Activated naive CD4-positive, alpha-beta T cell treated with anti-CD3 and anti-CD28 coated beads for 36 hours (primary cell): ENCODE measurements at regions of chr16 and their contacts with region 1.

Region 1: GRCh38 chr16:84084570-84085270 is 32.0 kb downstream of the MBTPS1 start:
- DNase-seq: peak; percentile 86
- H3K4me3 Mint-ChIP-seq: no peak overlapping the region
- H3K27ac Mint-ChIP-seq: no peak overlapping the region
- H3K4me1 Mint-ChIP-seq: peaks cover 32% of the 10 kb centered on the region
- H3K27me3 Mint-ChIP-seq: no peaks in the 10 kb centered on the region

Region 2: DNA sequence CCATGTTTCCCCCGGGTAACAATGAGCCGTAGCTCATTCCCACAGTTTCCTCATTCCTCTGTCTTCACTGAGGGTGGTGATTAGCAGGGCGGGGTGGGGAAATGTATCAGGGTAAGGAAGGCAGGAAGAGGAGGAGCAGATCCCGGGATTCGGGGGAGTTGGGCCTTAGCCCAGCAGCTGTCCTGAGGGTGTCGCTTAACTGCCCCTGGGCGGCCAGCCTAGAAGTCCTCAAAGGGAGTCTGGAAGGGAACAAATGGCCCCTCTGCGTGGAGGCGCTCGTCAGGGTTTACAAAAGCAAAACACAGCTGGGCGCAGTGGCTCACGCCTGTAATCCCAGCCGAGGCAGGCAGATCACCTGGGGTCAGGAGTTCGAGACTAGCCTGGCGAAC is 171.5 kb before region 1 on chr16:
- CTCF ChIA-PET with region 1: no interaction called
- intact Hi-C with region 1: no loop called
- DNase-seq: no peak
- H3K4me3 Mint-ChIP-seq: no peak overlapping the region
- H3K27ac Mint-ChIP-seq: no peak overlapping the region
- H3K4me1 Mint-ChIP-seq: no peaks in the 10 kb centered on the region
- H3K27me3 Mint-ChIP-seq: no peaks in the 10 kb centered on the region

Region 3: GRCh38 chr16:84044118-84044488 is 40.6 kb before region 1 on chr16:
- CTCF ChIA-PET with region 1: no interaction called
- intact Hi-C with region 1: no loop called
- DNase-seq: no peak
- H3K4me3 Mint-ChIP-seq: no peak overlapping the region
- H3K27ac Mint-ChIP-seq: no peak overlapping the region
- H3K4me1 Mint-ChIP-seq: peaks cover 5% of the 10 kb centered on the region
- H3K27me3 Mint-ChIP-seq: peaks cover 24% of the 10 kb centered on the region

Region 4: DNA sequence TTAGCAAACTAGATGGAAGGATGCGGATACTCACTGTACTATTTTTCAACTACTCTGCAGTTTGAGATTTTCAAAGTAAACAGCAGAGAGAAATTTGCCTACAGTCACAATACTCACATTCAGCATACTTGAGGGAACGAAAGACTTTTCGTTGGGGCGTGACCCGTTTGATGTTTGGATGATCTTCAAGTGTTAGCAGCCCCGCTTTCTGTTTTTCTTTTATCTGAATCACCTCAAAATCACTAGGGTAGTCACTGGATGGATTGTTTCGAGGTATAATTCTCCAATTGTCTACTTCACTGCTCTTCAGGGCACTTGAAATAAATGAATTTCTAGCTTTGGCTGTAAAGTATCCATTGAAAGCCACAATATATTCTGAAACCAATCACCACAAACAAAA is 14.2 kb after region 1 on chr16:
- CTCF ChIA-PET with region 1: interaction called, 12 read pairs
- intact Hi-C with region 1: loop called (anchors 1 kb)
- DNase-seq: no peak
- H3K4me3 Mint-ChIP-seq: no peak overlapping the region
- H3K27ac Mint-ChIP-seq: no peak overlapping the region
- H3K4me1 Mint-ChIP-seq: peaks cover 31% of the 10 kb centered on the region
- H3K27me3 Mint-ChIP-seq: no peaks in the 10 kb centered on the region

Region 5: GRCh38 chr16:84116720-84117493 is 32.2 kb after region 1 on chr16 and contains the start of gene MBTPS1:
- CTCF ChIA-PET with region 1: interaction called, 7 read pairs
- intact Hi-C with region 1: loop called (anchors 1 kb)
- DNase-seq: peak; percentile 98
- H3K4me3 Mint-ChIP-seq: peak within 1 kb of the TSS; percentile 91
- H3K27ac Mint-ChIP-seq: peak within 1 kb of the TSS; percentile 89
- H3K4me1 Mint-ChIP-seq: peaks cover 26% of the 10 kb centered on the region
- H3K27me3 Mint-ChIP-seq: no peaks in the 10 kb centered on the region
- total RNA-seq, gene MBTPS1: 36.9 to 41.3 TPM

Region 6: GRCh38 chr16:84144859-84145639 is 60.3 kb after region 1 on chr16 and contains the starts of genes DNAAF1 and HSDL1:
- CTCF ChIA-PET with region 1: interaction called, 10 read pairs
- intact Hi-C with region 1: loop called (anchors 1 kb)
- DNase-seq: peak; percentile 93
- H3K4me3 Mint-ChIP-seq: peak within 1 kb of the TSS; percentile 90
- H3K27ac Mint-ChIP-seq: no peak within 1 kb of the TSS
- H3K4me1 Mint-ChIP-seq: peaks cover 13% of the 10 kb centered on the region
- H3K27me3 Mint-ChIP-seq: no peaks in the 10 kb centered on the region
- total RNA-seq, gene DNAAF1: not detected
- total RNA-seq, gene HSDL1: 5.8 to 7.5 TPM

Region 7: GRCh38 chr16:84186685-84187437 is 102.1 kb after region 1 on chr16 and contains the start of gene TAF1C:
- CTCF ChIA-PET with region 1: interaction called, 49 read pairs
- intact Hi-C with region 1: loop called (anchors 1 kb)
- DNase-seq: peak; percentile 94
- H3K4me3 Mint-ChIP-seq: peak within 1 kb of the TSS; percentile 93
- H3K27ac Mint-ChIP-seq: peak within 1 kb of the TSS; percentile 89
- H3K4me1 Mint-ChIP-seq: peaks cover 21% of the 10 kb centered on the region
- H3K27me3 Mint-ChIP-seq: no peaks in the 10 kb centered on the region
- total RNA-seq, gene TAF1C: 59.3 to 66.2 TPM